ENCODE measurements at regions of chr12 and their contacts with region 1.

Region 1: GRCh38 chr12:43282106-43282505 is 269.9 kb downstream of the ADAMTS20 start:
- DNase-seq: peak; percentile 72
- H3K4me3 ChIP-seq: no peak overlapping the region
- H3K27ac ChIP-seq: no peak overlapping the region
- H3K4me1 ChIP-seq: peaks cover 51% of the 10 kb centered on the region
- H3K27me3 ChIP-seq: no peaks in the 10 kb centered on the region
- CTCF ChIP-seq: peak in 1 of 2 donors; percentile 14
- POLR2A ChIP-seq: no peak

Region 2: GRCh38 chr12:42332301-42333285 is 949.5 kb before region 1 on chr12:
- CTCF ChIA-PET with region 1: interaction called, 12 read pairs
- POLR2A ChIA-PET with region 1: no interaction called
- dilution Hi-C with region 1: no loop called
- intact Hi-C with region 1: loop called (anchors 5 kb)
- DNase-seq: peak; percentile 67
- H3K4me3 ChIP-seq: no peak overlapping the region
- H3K27ac ChIP-seq: no peak overlapping the region
- H3K4me1 ChIP-seq: peaks cover 6% of the 10 kb centered on the region
- H3K27me3 ChIP-seq: no peaks in the 10 kb centered on the region
- CTCF ChIP-seq: peak; percentile 33 to 53
- POLR2A ChIP-seq: no peak

Region 3: DNA sequence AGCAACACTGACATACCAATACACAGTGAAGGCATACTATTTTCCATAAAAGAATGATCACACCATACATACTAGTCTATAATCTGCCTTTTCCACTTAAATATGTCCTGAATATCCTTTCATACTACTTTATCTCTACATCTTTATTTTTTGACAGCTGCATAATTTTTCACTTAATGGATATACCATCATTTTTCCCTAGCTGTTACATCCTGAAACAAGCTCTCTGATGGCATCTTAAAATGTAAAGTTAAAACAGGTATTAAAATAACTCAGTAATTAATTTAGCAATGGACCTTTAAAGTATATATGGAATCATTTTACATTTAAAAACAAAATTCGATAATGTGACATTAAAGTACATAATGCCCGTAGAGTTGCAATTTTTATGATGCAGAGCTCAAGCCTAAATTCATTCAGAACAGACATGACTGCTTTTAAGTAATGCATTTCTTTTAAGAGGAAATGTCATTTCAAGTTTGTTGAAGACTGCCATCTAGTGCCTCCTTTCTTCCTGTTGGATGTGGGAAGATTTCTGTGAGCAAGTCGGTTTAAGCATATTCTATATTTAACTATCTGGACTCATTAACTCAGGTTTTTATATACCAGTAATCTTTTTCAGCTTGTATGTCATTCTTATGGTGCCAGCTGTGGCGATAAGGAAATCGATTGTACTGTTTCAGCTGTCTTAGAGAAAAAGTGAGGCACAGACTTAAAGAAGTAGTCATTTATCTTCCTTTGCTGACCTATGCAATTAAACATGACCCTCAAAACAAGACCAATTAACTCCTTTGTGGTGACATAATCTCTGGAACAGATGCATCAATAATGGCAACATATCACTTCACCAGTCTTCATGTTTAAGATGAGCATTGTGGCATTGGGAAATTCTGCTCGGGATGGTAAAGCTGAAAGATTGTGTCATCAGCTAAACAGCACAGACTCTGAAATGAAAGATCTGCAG is 712.9 kb before region 1 on chr12:
- CTCF ChIA-PET with region 1: interaction called, 12 read pairs
- POLR2A ChIA-PET with region 1: interaction called, 3 read pairs
- dilution Hi-C with region 1: no loop called
- intact Hi-C with region 1: no loop called
- DNase-seq: peak; percentile 72
- H3K4me3 ChIP-seq: no peak overlapping the region
- H3K27ac ChIP-seq: no peak overlapping the region
- H3K4me1 ChIP-seq: peaks cover 33% of the 10 kb centered on the region
- H3K27me3 ChIP-seq: no peaks in the 10 kb centered on the region
- CTCF ChIP-seq: peak; percentile 29 to 35
- POLR2A ChIP-seq: no peak

Region 4: GRCh38 chr12:42589465-42590329 is 692.4 kb before region 1 on chr12 and contains the start of gene PRICKLE1:
- CTCF ChIA-PET with region 1: interaction called, 24 read pairs
- POLR2A ChIA-PET with region 1: interaction called, 6 read pairs
- dilution Hi-C with region 1: loop called (anchors 10 kb)
- intact Hi-C with region 1: loop called (anchors 1 kb)
- DNase-seq: peak; percentile 69
- H3K4me3 ChIP-seq: peak within 1 kb of the TSS; percentile 81 to 99 (median 86)
- H3K27ac ChIP-seq: peak within 1 kb of the TSS; percentile 59
- H3K4me1 ChIP-seq: peaks cover 38% of the 10 kb centered on the region
- H3K27me3 ChIP-seq: no peaks in the 10 kb centered on the region
- CTCF ChIP-seq: no peak
- POLR2A ChIP-seq: peak; percentile 68
- total RNA-seq, gene PRICKLE1: 69.0 and 86.0 TPM in 2 replicates

Region 5: GRCh38 chr12:43079476-43079875 is 202.6 kb before region 1 on chr12:
- CTCF ChIA-PET with region 1: interaction called, 4 read pairs
- POLR2A ChIA-PET with region 1: no interaction called
- dilution Hi-C with region 1: no loop called
- intact Hi-C with region 1: loop called (anchors 2 kb)
- DNase-seq: peak; percentile 85
- H3K4me3 ChIP-seq: peak overlapping the region in 1 of 3 experiments; percentile 18
- H3K27ac ChIP-seq: peak overlapping the region; percentile 93
- H3K4me1 ChIP-seq: peaks cover 27% of the 10 kb centered on the region
- H3K27me3 ChIP-seq: no peaks in the 10 kb centered on the region
- CTCF ChIP-seq: no peak
- POLR2A ChIP-seq: no peak

Region 6: DNA sequence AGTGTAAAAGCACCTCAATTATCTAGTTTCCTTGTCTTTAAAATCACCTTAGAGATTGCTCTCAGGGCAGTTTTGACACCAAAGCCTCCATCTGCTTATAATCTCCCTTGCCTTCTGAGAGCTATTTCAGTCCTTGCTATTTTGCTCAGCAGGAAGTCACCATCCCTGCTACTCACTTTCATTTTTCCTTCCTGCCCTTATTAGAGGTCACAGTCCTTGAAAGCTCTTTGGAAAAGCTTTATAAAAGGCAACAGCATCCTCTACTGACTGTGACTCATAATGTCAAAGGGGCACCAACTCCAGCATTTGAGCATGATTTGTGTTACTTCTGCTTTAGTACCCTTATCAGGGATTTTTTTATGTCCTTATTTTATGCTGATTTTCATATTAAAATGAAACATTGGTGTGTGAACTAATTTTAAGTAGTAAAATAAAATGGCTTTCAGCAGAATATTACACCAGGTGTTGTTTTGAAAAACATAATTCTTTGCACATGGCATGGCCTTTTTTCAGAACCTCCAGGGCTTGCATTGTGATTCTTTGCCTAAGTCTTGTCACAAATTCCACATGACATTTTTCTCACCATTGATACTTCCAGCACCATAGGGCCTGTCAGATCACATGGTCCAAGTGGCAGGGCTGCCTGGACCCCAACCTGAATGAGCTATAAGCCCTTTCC is 56.9 kb after region 1 on chr12:
- CTCF ChIA-PET with region 1: interaction called, 83 read pairs
- POLR2A ChIA-PET with region 1: no interaction called
- dilution Hi-C with region 1: no loop called
- intact Hi-C with region 1: loop called (anchors 1 kb)
- DNase-seq: peak; percentile 86
- H3K4me3 ChIP-seq: no peak overlapping the region
- H3K27ac ChIP-seq: peak overlapping the region; percentile 11
- H3K4me1 ChIP-seq: peaks cover 24% of the 10 kb centered on the region
- H3K27me3 ChIP-seq: no peaks in the 10 kb centered on the region
- CTCF ChIP-seq: peak; percentile 40 to 68
- POLR2A ChIP-seq: no peak

Region 7: DNA sequence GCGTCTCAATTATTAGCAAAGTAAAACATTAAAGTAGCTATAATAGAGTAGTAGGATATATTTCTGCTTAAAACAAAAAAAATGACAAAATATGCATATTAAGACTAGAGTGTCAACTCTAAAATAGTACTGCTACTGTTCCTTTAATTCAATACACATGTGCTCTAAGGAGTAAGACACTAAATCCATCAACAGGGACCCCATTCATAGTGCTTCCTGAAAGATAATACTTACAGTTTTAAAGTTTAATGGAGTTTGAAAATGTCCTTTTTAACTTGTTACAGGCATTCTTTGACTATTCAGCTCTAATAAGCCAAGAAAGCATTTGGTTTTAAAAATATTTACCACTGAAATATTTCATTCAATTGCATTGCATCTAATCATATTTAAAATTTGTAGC is 124.7 kb after region 1 on chr12:
- CTCF ChIA-PET with region 1: no interaction called
- POLR2A ChIA-PET with region 1: no interaction called
- dilution Hi-C with region 1: no loop called
- intact Hi-C with region 1: no loop called
- DNase-seq: peak; percentile 7
- H3K4me3 ChIP-seq: no peak overlapping the region
- H3K27ac ChIP-seq: no peak overlapping the region
- H3K4me1 ChIP-seq: no peaks in the 10 kb centered on the region
- H3K27me3 ChIP-seq: no peaks in the 10 kb centered on the region
- CTCF ChIP-seq: no peak
- POLR2A ChIP-seq: no peak

Region 8: GRCh38 chr12:44053550-44054243 is 771.6 kb after region 1 on chr12:
- CTCF ChIA-PET with region 1: no interaction called
- POLR2A ChIA-PET with region 1: no interaction called
- dilution Hi-C with region 1: no loop called
- intact Hi-C with region 1: no loop called
- DNase-seq: peak; percentile 8
- H3K4me3 ChIP-seq: no peak overlapping the region
- H3K27ac ChIP-seq: no peak overlapping the region
- H3K4me1 ChIP-seq: no peaks in the 10 kb centered on the region
- H3K27me3 ChIP-seq: no peaks in the 10 kb centered on the region
- CTCF ChIP-seq: no peak
- POLR2A ChIP-seq: no peak

Measured in endothelial cell of umbilical vein (primary cell).